ENCODE measurements at regions of chr12 and their contacts with region 1.

Region 1: DNA sequence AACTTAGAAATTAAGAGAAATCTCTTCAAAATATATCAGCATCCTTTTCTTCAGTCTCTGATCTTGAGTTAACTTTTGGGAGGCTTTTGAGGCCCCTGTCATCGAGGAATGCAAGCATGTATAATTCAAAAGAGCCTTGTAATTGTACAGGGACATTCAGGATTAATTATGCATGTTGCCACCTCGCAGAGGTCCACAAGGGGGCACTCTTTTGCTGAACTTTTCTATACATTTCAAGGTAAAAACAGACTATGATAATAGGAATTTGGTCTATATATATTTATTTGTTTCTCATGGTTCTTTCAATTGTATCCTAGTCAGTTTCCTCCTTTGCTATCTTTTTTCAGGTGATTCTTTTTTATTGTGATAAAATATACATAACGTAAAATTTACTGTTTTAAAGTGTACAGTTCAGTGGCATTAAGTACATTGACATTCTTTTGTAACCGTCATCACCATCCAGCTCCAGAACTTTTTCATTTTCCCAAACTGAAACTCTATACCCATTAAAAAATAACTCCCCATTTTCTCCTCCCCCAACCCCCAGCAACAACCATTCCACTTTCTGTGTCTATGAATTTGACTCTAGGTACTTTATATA is 47.0 kb upstream of the SLC2A13 start:
- DNase-seq: peak; percentile 21 to 38
- ATAC-seq: peak in 3 of 8 donors; percentile 46 to 55 (median 47)
- H3K4me3 ChIP-seq: no peak overlapping the region
- H3K27ac ChIP-seq: no peak overlapping the region
- H3K4me1 ChIP-seq: peaks cover 0 to 12% (median 0%) of the 10 kb centered on the region in 9 donors
- H3K27me3 ChIP-seq: no peaks in the 10 kb centered on the region
- CTCF ChIP-seq: peak; percentile 57 to 93 (median 83)

Region 2: GRCh38 chr12:40224439-40225291 is 71.8 kb after region 1 on chr12 and contains the start of gene LRRK2:
- intact Hi-C with region 1: loop called in 5 of 10 experiments (anchors 2 to 10 kb)
- DNase-seq: peak; percentile 86
- ATAC-seq: peak; percentile 85 to 97 (median 92)
- H3K4me3 ChIP-seq: peak within 1 kb of the TSS; percentile 52 to 78 (median 74)
- H3K27ac ChIP-seq: peak within 1 kb of the TSS; percentile 76 to 98 (median 95)
- H3K4me1 ChIP-seq: peaks cover 0 to 51% (median 8%) of the 10 kb centered on the region in 9 donors
- H3K27me3 ChIP-seq: no peaks in the 10 kb centered on the region
- CTCF ChIP-seq: peak in 5 of 9 donors; percentile 13 to 28 (median 17)
- total RNA-seq, gene LRRK2: 4.4 to 9.1 (median 7.0) TPM

Region 3: DNA sequence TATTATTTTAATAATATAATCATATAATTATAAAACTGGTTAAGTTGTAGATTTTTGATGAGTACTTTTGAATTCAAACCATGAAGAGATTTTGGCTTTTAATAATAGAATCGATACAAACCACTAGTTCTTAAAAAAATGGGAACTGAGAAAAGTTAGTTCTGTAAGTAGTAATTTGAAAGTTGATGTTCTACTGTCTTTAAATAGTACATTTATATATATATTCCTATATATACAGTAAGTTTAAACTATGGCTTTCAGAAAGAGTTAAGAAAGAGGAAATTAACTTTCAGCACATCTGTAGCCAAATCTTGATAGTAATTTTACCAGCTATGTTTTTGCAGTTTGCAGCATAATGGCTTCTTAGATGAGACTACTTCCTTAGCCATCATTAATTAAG is 79.7 kb after region 1 on chr12:
- intact Hi-C with region 1: loop called in 4 of 10 experiments (anchors 2 to 10 kb)
- DNase-seq: no peak
- ATAC-seq: no peak
- H3K4me3 ChIP-seq: no peak overlapping the region
- H3K27ac ChIP-seq: no peak overlapping the region
- H3K4me1 ChIP-seq: peaks cover 0 to 29% (median 0%) of the 10 kb centered on the region in 9 donors
- H3K27me3 ChIP-seq: no peaks in the 10 kb centered on the region
- CTCF ChIP-seq: no peak

Region 4: GRCh38 chr12:40312982-40313576 is 160.2 kb after region 1 on chr12:
- intact Hi-C with region 1: loop called in 7 of 10 experiments (anchors 2 to 10 kb)
- DNase-seq: no peak
- ATAC-seq: no peak
- H3K4me3 ChIP-seq: no peak overlapping the region
- H3K27ac ChIP-seq: no peak overlapping the region
- H3K4me1 ChIP-seq: no peaks in the 10 kb centered on the region
- H3K27me3 ChIP-seq: no peaks in the 10 kb centered on the region
- CTCF ChIP-seq: peak in 7 of 9 donors; percentile 26 to 59 (median 48)

Region 5: DNA sequence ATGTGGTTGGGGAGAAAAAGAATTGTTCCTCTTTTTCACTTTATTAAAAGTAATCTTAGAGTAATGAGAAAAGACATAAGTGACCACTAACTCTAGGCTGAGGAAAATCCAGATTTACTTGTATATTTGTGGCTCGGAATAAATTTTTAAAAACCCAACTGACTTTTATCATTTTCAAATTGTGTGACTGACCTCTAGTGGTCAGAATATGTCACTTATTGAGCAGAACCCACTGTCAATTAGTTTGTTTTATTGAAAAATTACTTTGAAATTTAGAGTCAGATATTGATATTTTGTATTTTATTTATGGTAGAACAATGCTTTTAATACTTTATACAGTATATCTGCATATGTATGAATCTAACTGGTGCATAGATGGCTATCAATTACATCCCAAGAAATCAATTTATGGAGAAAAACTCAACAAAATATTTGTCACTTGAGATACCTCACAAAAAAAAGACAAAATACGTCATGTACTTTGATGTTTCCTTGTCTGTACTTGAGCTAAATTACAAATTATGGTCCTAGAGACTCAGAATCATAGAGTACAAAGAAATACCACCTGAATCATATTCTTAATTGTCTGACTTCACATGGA is 768.8 kb after region 1 on chr12:
- intact Hi-C with region 1: loop called in 1 of 10 experiments (anchors 10 kb)
- DNase-seq: no peak
- ATAC-seq: no peak
- H3K4me3 ChIP-seq: no peak overlapping the region
- H3K27ac ChIP-seq: no peak overlapping the region
- H3K4me1 ChIP-seq: no peaks in the 10 kb centered on the region
- H3K27me3 ChIP-seq: peaks cover 0 to 5% (median 0%) of the 10 kb centered on the region in 7 donors
- CTCF ChIP-seq: peak; percentile 21 to 72 (median 62)

Measured in heart right ventricle (tissue), 16 donors.